GM12878 (cell line): ENCODE measurements at regions of chr22 and their contacts with region 1.

Region 1: DNA sequence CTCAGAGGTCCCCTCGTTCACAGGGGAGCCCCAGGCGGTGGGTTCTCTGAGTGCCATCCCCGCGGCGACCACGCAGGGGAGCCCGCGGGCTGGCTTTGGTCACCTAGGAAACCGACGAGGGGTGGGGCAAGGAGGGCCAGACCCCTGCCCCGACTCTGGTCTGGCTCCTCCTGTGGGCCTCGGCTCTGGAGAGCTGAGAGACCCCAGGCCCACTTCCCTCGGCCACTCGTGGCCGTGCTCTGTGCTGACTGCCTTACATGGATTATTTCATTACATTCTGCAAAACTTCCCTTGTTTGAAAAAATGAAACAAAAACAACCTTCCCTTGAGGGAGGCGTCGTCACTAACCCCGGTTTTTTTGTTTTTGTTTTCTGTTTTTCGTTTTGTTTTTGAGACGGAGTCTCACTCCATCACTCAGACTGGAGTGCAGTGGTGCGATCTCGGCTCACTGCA is 15.1 kb upstream of the CYTH4 start:
- DNase-seq: no peak
- ATAC-seq: peak; percentile 96
- H3K4me3 ChIP-seq: peak overlapping the region; percentile 52
- H3K27ac ChIP-seq: peak overlapping the region; percentile 76
- H3K4me1 ChIP-seq: peaks cover 7% of the 10 kb centered on the region
- H3K27me3 ChIP-seq: no peaks in the 10 kb centered on the region
- CTCF ChIP-seq: peak; percentile 86 to 97 (median 89)
- EP300 ChIP-seq: no peak
- POLR2A ChIP-seq: no peak
- RAD21 ChIP-seq: peak; percentile 83

Region 2: GRCh38 chr22:36946421-36947158 is 320.6 kb before region 1 on chr22:
- CTCF ChIA-PET with region 1: no interaction called
- POLR2A ChIA-PET with region 1: no interaction called
- RAD21 ChIA-PET with region 1: no interaction called
- SMC1A ChIA-PET with region 1: no interaction called
- in situ Hi-C with region 1: no loop called
- intact Hi-C with region 1: no loop called
- DNase-seq: no peak
- ATAC-seq: peak; percentile 68
- H3K4me3 ChIP-seq: no peak overlapping the region
- H3K27ac ChIP-seq: no peak overlapping the region
- H3K4me1 ChIP-seq: peaks cover 16% of the 10 kb centered on the region
- H3K27me3 ChIP-seq: no peaks in the 10 kb centered on the region
- CTCF ChIP-seq: peak in 2 of 3 experiments; percentile 21 to 39; a peak in 5 of 6 replicates
- EP300 ChIP-seq: no peak
- POLR2A ChIP-seq: no peak
- RAD21 ChIP-seq: peak; percentile 51

Region 3: GRCh38 chr22:37282385-37282677 is 15.2 kb after region 1 on chr22 and contains the start of gene CYTH4:
- CTCF ChIA-PET with region 1: interaction called, 124 read pairs
- POLR2A ChIA-PET with region 1: interaction called, 8 read pairs
- RAD21 ChIA-PET with region 1: interaction called, 14 read pairs
- SMC1A ChIA-PET with region 1: interaction called, 24 read pairs
- in situ Hi-C with region 1: no loop called
- intact Hi-C with region 1: no loop called
- DNase-seq: no peak
- ATAC-seq: peak; percentile 79
- H3K4me3 ChIP-seq: peak within 1 kb of the TSS; percentile 69
- H3K27ac ChIP-seq: peak within 1 kb of the TSS; percentile 93
- H3K4me1 ChIP-seq: peaks cover 30% of the 10 kb centered on the region
- H3K27me3 ChIP-seq: no peaks in the 10 kb centered on the region
- CTCF ChIP-seq: no peak
- EP300 ChIP-seq: no peak
- POLR2A ChIP-seq: peak; percentile 80
- RAD21 ChIP-seq: no peak
- polyA plus RNA-seq, gene CYTH4: 1.5 to 1.8 TPM

Region 4: DNA sequence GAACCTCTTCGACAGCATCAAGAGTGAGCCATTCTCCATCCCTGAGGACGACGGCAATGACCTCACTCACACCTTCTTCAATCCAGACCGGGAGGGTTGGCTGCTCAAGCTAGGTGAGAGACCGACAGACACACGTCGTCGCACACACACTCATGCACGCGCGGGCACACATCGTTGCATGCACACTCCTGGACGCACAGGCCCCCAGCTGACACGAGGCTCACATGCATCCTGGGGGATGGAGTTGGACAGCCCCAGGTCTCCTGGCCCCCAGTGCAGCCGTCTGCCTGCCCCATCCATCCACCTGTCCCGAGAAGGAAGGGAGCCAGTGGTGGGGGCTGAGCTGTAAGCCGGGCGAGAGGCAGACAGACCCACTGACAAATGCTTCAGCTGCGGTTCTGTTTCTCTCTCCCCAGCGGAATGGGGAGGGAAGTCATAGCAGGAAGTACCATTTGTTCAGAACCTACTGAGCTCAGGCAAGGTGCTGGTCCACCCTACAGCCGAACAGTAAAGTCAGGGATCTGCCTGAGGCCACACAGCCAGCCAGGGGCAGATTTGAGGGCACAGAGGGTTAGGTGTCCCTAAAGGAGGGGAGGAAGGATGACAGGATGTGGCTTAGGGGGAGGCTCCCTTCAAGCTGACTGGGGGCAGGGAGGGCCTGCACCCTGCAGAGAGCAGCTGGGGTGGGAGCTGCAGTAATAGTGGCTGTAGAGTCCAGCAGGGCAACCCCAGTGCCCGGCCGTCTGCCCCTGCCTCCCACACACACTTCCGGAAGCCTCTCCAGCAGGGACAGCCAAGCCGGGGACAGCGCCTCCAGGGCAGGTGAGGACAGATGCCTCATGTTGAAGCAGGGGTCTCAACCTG is 42.3 kb after region 1 on chr22:
- CTCF ChIA-PET with region 1: interaction called, 181 read pairs
- POLR2A ChIA-PET with region 1: interaction called, 6 read pairs
- RAD21 ChIA-PET with region 1: interaction called, 35 read pairs
- SMC1A ChIA-PET with region 1: interaction called, 65 read pairs
- in situ Hi-C with region 1: no loop called
- intact Hi-C with region 1: no loop called
- DNase-seq: peak; percentile 55
- ATAC-seq: peak; percentile 55
- H3K4me3 ChIP-seq: no peak overlapping the region; the same call in 1 of the 2 replicates
- H3K27ac ChIP-seq: peak overlapping the region; percentile 91
- H3K4me1 ChIP-seq: peaks cover 74% of the 10 kb centered on the region
- H3K27me3 ChIP-seq: no peaks in the 10 kb centered on the region
- CTCF ChIP-seq: no peak
- EP300 ChIP-seq: no peak; a peak in 1 of 4 replicates
- POLR2A ChIP-seq: peak; percentile 40; the same call in 1 of the 2 replicates
- RAD21 ChIP-seq: no peak

Region 5: GRCh38 chr22:37428649-37429586 is 161.8 kb after region 1 on chr22:
- CTCF ChIA-PET with region 1: interaction called, 23 read pairs
- POLR2A ChIA-PET with region 1: no interaction called
- RAD21 ChIA-PET with region 1: interaction called, 4 read pairs
- SMC1A ChIA-PET with region 1: interaction called, 10 read pairs
- in situ Hi-C with region 1: no loop called
- intact Hi-C with region 1: loop called (anchors 2 kb)
- DNase-seq: no peak
- ATAC-seq: peak; percentile 87
- H3K4me3 ChIP-seq: no peak overlapping the region
- H3K27ac ChIP-seq: no peak overlapping the region
- H3K4me1 ChIP-seq: no peaks in the 10 kb centered on the region
- H3K27me3 ChIP-seq: peaks cover 11 to 15% of the 10 kb centered on the region in 2 experiments
- CTCF ChIP-seq: peak; percentile 75 to 81 (median 75)
- EP300 ChIP-seq: no peak
- POLR2A ChIP-seq: no peak
- RAD21 ChIP-seq: peak; percentile 56

Region 6: GRCh38 chr22:37457093-37457893 is 190.1 kb after region 1 on chr22:
- CTCF ChIA-PET with region 1: interaction called, 24 read pairs
- POLR2A ChIA-PET with region 1: no interaction called
- RAD21 ChIA-PET with region 1: interaction called, 5 read pairs
- SMC1A ChIA-PET with region 1: interaction called, 4 read pairs
- in situ Hi-C with region 1: loop called (anchors 5 kb)
- intact Hi-C with region 1: loop called (anchors 1 kb)
- DNase-seq: peak; percentile 24
- ATAC-seq: peak; percentile 100
- H3K4me3 ChIP-seq: no peak overlapping the region
- H3K27ac ChIP-seq: no peak overlapping the region
- H3K4me1 ChIP-seq: no peaks in the 10 kb centered on the region
- H3K27me3 ChIP-seq: no peaks in the 10 kb centered on the region
- CTCF ChIP-seq: peak; percentile 88 to 98 (median 96)
- EP300 ChIP-seq: no peak
- POLR2A ChIP-seq: no peak
- RAD21 ChIP-seq: peak; percentile 97

Region 7: DNA sequence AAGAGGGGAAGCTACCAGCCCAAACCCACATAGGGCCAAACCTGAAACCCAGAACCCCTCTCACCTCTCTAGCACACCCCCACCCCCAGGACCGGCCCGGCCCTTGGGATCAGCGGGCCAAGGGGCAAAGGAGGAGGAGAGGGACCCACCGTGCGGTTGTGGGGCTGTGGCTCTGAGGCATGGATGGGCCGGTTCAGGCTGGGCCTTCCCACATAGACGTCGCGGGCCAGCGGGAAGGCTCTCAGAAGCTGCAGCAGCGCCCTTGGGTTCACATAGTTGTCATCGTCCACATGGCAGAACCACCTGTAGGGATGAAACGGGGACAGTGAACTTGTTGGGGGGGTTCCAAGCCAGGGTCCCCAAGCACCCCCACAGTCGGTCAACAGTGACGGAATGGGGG is 212.0 kb after region 1 on chr22:
- CTCF ChIA-PET with region 1: no interaction called
- POLR2A ChIA-PET with region 1: no interaction called
- RAD21 ChIA-PET with region 1: no interaction called
- SMC1A ChIA-PET with region 1: no interaction called
- in situ Hi-C with region 1: no loop called
- intact Hi-C with region 1: no loop called
- DNase-seq: no peak
- ATAC-seq: no peak
- H3K4me3 ChIP-seq: no peak overlapping the region
- H3K27ac ChIP-seq: no peak overlapping the region
- H3K4me1 ChIP-seq: peaks cover 16% of the 10 kb centered on the region
- H3K27me3 ChIP-seq: no peaks in the 10 kb centered on the region
- CTCF ChIP-seq: no peak
- EP300 ChIP-seq: no peak
- POLR2A ChIP-seq: no peak
- RAD21 ChIP-seq: no peak

Region 8: DNA sequence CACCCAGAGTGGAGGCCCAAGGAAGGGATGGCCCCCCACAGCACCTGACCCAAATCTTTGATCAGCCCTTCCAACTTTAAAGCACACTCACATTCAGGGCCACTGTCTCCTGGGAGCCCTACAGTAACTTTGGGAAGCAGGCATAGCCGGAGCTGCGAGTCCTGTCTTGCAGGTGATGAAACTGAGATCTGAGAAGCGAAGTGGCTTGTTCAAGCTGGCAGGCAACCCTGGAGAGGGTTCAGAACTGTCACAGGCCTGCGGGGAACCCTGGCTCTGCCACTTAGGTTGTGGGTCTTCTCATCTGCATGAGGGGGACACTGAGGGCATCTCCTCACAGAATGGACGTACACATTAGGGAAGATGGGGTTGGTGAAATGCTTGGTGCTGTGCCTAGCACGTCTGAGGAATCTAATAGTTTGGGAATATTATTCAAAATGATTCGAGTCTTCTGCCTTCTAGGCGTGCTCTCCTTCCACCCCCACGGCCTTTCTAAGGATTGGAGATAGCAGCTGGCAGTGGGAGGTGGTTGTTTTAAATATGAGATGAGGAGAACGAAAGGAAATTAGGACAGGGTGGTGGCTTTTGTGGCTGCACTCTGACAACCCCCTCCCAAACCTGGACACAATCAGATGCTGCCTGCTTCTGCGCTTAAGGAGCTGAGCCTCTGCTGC is 1507.5 kb after region 1 on chr22:
- CTCF ChIA-PET with region 1: no interaction called
- POLR2A ChIA-PET with region 1: no interaction called
- RAD21 ChIA-PET with region 1: no interaction called
- SMC1A ChIA-PET with region 1: no interaction called
- in situ Hi-C with region 1: no loop called
- intact Hi-C with region 1: no loop called
- DNase-seq: no peak
- ATAC-seq: no peak
- H3K4me3 ChIP-seq: no peak overlapping the region
- H3K27ac ChIP-seq: no peak overlapping the region
- H3K4me1 ChIP-seq: no peaks in the 10 kb centered on the region
- H3K27me3 ChIP-seq: no peaks in the 10 kb centered on the region
- CTCF ChIP-seq: no peak
- EP300 ChIP-seq: no peak
- POLR2A ChIP-seq: no peak
- RAD21 ChIP-seq: no peak